Activated CD4-positive, alpha-beta T cell treated with anti-CD3 and anti-CD28 coated beads for 36 hours (primary cell): ENCODE measurements at regions of chr19 and their contacts with region 1.

Region 1: DNA sequence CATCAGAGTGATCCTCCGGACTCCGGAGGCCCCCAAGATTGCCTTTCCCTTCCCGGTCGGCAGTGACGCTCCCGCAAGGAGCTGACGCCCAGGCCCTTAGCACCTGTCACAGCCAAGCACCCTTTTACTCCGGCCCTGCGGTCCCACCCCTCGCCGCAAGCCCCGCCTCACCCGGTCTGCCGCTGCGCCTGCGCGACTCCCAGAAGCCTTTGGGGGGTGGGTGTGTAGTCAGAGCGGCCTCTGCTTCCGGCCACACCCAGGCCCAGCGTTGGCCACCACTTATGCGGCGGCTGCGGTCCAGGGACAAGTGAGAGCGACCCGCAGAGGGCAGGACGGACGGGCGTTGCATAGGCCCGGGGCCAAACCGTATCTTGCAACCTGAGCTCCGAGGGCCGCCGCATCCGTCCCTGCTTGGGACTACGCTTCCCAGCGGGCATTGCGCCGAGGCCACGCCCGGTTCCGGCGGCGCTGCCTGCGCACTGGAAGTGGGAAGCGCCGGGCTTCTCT is 441 bp upstream of the ZFP28 start:
- DNase-seq: peak; percentile 95
- ATAC-seq: peak; percentile 97
- H3K4me3 Mint-ChIP-seq: peak overlapping the region; percentile 74
- H3K27ac Mint-ChIP-seq: peak overlapping the region; percentile 87
- H3K4me1 Mint-ChIP-seq: peaks cover 15% of the 10 kb centered on the region
- H3K27me3 Mint-ChIP-seq: no peaks in the 10 kb centered on the region

Region 2: DNA sequence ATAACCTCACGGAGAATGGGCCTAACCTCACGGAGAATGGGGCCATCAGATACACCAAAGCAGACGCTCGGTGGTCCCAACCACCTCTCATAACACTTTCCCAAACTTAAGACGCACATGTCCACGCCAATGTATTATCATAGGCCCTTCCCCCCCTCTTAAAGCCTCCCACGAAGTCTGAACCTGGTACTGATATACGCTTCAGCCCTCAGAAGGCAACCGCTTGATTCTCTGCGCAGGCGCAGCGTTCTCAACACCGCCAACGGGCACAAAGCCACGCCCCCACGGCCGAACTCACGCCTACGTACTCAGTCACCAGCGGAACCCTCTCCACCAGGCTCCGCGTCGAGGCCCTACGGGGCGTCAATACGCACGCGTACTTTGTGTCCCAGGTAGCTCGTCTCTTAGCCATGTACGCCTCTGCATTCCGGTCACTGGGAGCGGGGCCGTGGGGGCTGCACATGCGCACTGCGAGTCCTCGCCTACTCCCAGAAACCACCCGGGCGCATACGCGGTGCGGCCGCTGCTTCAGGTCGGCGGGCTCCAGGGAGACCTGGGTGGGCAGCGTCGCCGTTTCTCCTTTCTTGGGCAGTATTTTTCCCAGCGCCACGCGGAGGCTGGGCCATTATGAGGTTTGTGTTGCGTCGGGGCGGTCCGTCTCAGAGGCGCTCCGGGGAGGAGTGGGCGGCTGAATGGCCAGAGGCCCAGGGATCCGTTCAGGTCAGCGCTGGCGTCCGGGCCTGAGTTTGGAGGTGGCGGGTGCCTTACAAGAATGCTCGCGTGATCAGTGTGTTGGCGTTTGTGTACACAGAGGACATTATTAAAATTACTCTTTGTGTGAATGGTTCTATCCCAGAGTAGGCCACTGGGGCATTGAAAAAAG is 170.2 kb before region 1 on chr19:
- CTCF ChIA-PET with region 1: no interaction called
- POLR2A ChIA-PET with region 1: no interaction called
- intact Hi-C with region 1: loop called in 1 of 2 experiments (anchors 1 kb)
- DNase-seq: peak; percentile 92
- ATAC-seq: peak; percentile 99
- H3K4me3 Mint-ChIP-seq: peak overlapping the region; percentile 95
- H3K27ac Mint-ChIP-seq: peak overlapping the region; percentile 89
- H3K4me1 Mint-ChIP-seq: peaks cover 19% of the 10 kb centered on the region
- H3K27me3 Mint-ChIP-seq: no peaks in the 10 kb centered on the region

Region 3: GRCh38 chr19:56403764-56404704 is 134.3 kb before region 1 on chr19 and contains the start of gene ZNF583:
- CTCF ChIA-PET with region 1: no interaction called
- POLR2A ChIA-PET with region 1: no interaction called
- intact Hi-C with region 1: loop called in 1 of 2 experiments (anchors 1 kb)
- DNase-seq: peak; percentile 94
- ATAC-seq: peak; percentile 84
- H3K4me3 Mint-ChIP-seq: peak within 1 kb of the TSS; percentile 80
- H3K27ac Mint-ChIP-seq: peak within 1 kb of the TSS; percentile 80
- H3K4me1 Mint-ChIP-seq: peaks cover 32% of the 10 kb centered on the region
- H3K27me3 Mint-ChIP-seq: no peaks in the 10 kb centered on the region
- total RNA-seq, gene ZNF583: 2.1 to 3.0 TPM

Region 4: DNA sequence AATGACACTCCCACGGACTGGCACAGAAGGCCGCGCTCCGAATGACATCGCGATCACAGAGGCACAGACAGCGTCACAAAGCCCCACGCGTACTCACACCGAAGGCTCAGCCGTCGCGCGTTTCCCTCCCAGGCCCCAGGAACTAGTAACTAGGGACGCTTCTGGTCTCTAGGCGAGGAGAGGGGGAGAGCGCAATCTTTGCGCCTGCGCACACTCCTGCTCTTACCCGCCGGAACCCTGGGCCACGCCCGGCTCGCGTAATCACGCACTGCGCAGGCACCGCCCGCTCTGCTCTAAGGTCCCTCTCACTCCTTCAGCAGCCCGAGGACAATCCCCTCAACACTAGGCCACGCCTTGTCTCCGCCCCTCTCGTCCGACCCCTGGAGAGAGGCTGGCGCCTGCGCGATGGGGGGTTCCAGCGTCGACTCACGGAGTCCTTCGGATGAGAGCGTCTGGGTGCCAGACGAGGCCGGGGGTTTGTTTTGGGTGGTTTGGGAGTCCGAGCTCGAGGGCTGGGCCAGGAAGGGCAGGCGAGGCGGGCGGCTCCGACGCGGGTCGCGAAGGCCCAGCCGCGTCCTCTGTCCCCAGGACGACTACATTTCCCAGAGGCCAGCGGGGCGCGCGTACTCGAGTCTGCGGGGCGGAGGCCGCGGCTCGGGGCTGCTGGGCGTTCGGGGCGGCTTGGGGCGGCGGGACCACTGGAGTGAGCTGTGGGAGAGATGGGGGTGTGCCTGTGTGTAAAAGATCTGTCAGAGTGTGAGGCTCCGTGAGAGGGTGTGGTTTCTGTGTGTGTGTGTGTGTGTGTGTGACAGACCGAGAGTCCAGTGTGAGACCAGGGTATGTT is 30.6 kb before region 1 on chr19 and contains the start of gene ZNF471:
- CTCF ChIA-PET with region 1: no interaction called
- POLR2A ChIA-PET with region 1: no interaction called
- intact Hi-C with region 1: loop called in 1 of 2 experiments (anchors 1 kb)
- DNase-seq: peak; percentile 96
- ATAC-seq: peak; percentile 99
- H3K4me3 Mint-ChIP-seq: no peak within 1 kb of the TSS
- H3K27ac Mint-ChIP-seq: peak within 1 kb of the TSS; percentile 12
- H3K4me1 Mint-ChIP-seq: peaks cover 5% of the 10 kb centered on the region
- H3K27me3 Mint-ChIP-seq: peaks cover 2% of the 10 kb centered on the region
- total RNA-seq, gene ZNF471: 1.4 to 1.5 TPM

Region 5: GRCh38 chr19:56594783-56595547 is 56.7 kb after region 1 on chr19 and contains the start of gene ZNF71:
- CTCF ChIA-PET with region 1: no interaction called
- POLR2A ChIA-PET with region 1: no interaction called
- intact Hi-C with region 1: loop called (anchors 1 kb)
- DNase-seq: peak; percentile 94
- ATAC-seq: peak; percentile 98
- H3K4me3 Mint-ChIP-seq: peak within 1 kb of the TSS; percentile 87
- H3K27ac Mint-ChIP-seq: peak within 1 kb of the TSS; percentile 71
- H3K4me1 Mint-ChIP-seq: peaks cover 19% of the 10 kb centered on the region
- H3K27me3 Mint-ChIP-seq: no peaks in the 10 kb centered on the region
- total RNA-seq, gene ZNF71: 4.4 to 4.6 TPM

Region 6: DNA sequence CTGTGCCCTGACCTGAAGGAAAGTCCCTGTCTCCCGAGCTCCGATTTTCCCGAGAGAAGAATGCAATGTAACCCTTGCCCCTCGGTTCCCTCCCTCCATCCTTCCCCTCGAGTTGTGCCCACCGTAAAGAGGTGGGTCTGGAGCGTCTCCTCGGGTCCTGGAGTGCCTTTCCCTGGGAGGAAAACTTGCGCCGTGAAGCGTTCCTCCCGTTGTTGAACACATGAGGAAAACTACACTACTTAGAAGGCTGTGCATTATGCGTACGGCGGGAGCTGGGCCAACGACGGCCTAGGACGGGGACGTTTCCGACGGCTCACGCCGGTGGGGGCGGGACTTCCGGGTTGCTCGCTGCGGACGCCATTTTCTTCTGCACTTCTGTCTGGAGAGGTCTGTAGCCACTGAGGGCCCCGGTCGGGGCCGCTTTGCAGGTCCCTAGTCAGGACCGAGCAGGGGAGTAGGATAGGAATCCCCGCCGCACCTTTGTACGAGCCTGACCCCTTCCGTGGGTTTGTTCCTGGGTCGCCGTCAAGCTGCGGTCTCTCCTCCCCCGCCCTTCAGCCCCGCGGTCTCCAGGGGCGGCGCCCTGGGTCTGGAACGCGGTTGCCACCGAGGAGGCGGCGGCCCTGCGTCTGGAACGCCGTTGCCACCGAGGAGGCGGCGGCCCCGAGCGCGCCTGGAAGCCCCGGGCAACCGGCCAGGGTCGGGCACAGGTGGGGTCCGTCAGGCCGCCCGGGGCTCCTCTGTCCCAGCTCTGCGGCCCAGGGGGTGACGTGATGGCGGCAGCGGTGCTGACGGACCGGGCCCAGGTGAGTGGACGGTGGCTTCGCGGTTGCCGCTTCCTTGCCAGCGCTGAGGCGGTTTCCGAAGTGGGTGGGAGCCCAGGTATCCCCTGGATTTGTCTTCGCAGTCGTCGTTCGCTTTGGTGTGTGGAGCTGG is 653.1 kb after region 1 on chr19 and contains the start of gene ZNF264:
- CTCF ChIA-PET with region 1: no interaction called
- POLR2A ChIA-PET with region 1: no interaction called
- intact Hi-C with region 1: loop called in 1 of 2 experiments (anchors 5 kb)
- DNase-seq: peak; percentile 93
- ATAC-seq: peak; percentile 96
- H3K4me3 Mint-ChIP-seq: peak within 1 kb of the TSS; percentile 93
- H3K27ac Mint-ChIP-seq: peak within 1 kb of the TSS; percentile 95
- H3K4me1 Mint-ChIP-seq: peaks cover 28% of the 10 kb centered on the region
- H3K27me3 Mint-ChIP-seq: peaks cover 4% of the 10 kb centered on the region
- total RNA-seq, gene ZNF264: 14.8 to 21.1 TPM